Heart left ventricle (tissue), 16 donors: ENCODE measurements at regions of chr17 and their contacts with region 1.

Region 1: DNA sequence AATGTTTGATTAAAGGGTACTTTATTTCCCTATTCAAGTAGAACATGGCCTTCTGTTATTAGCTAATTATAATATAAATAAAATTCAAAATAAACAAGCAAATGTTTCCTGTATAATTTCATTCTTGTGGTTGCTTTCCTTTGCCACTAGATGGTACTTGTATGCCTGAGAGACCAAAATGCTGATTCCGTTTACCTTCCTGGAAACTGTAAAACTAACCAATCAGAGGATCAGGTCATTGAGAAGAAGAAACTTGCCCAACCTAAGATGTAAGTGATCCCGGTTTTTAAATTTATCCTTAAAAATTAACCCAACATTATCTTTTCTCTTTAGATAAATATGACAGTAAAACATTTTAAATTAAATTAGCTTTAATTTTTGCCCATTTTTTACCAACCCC is 8.1 kb upstream of the ABCA5 start:
- DNase-seq: no peak
- ATAC-seq: peak in 1 of 4 donors; percentile 43
- H3K4me3 ChIP-seq: no peak overlapping the region
- H3K27ac ChIP-seq: no peak overlapping the region
- H3K4me1 ChIP-seq: no peaks in the 10 kb centered on the region
- H3K27me3 ChIP-seq: no peaks in the 10 kb centered on the region
- CTCF ChIP-seq: peak; percentile 24 to 55 (median 44)
- POLR2A ChIP-seq: no peak

Region 2: GRCh38 chr17:69390795-69391501 is 55.9 kb after region 1 on chr17:
- intact Hi-C with region 1: loop called in 2 of 10 experiments (anchors 10 kb)
- DNase-seq: no peak
- ATAC-seq: no peak
- H3K4me3 ChIP-seq: no peak overlapping the region
- H3K27ac ChIP-seq: no peak overlapping the region
- H3K4me1 ChIP-seq: no peaks in the 10 kb centered on the region
- H3K27me3 ChIP-seq: no peaks in the 10 kb centered on the region
- CTCF ChIP-seq: no peak
- POLR2A ChIP-seq: no peak